ENCODE measurements at regions of chr4 and their contacts with region 1.

Region 1: DNA sequence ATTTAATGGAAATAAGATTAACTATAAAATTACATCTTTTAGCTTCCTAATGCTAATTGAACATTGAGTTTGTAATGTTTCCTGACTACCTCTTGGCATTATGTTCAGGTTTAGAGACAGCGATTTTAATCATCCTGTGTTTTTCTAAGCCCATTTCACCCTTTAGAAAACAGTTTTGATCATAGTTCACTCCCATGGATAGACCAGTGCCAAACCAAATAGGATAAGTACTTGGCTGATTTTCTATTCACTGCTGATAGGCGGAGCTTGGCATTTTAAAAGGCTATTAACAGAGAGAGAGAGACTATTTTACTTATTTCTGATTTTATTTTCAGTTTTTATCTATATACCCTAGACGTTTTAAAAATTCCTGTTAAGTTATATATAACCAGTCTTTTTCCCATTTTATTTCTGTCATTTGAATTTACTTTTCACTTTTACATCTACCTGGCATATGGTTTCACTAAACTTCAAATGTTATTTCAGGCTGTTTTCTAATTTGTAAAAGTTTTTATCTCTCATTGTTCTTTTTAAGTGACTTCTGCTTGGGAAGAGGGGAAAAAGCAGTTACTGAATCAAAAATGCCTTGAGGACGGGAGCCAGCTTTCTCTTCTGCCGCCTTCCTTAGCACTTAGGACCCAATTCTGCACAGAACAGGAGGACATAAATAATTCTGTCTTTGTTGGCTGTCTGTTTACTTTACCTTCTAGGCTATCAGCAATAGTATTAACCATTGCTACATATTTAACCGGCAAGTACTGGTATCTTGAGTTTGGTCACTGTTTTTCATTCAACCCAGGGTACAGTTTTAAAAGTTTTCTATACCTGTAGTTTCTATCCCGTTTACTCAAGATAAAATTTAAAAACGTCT is 46.4 kb downstream of the SGMS2 start:
- DNase-seq: no peak

Region 2: GRCh38 chr4:106717091-106717490 is 1154.1 kb before region 1 on chr4:
- intact Hi-C with region 1: loop called in 1 of 2 experiments (anchors 10 kb)
- DNase-seq: no peak

Region 3: GRCh38 chr4:107896158-107897045 is 25.3 kb after region 1 on chr4:
- intact Hi-C with region 1: loop called in 1 of 2 experiments (anchors 2 kb)
- DNase-seq: no peak

Measured in posterior vena cava (tissue), 2 donors.